ENCODE measurements at regions of chr12 and their contacts with region 1.

Region 1: DNA sequence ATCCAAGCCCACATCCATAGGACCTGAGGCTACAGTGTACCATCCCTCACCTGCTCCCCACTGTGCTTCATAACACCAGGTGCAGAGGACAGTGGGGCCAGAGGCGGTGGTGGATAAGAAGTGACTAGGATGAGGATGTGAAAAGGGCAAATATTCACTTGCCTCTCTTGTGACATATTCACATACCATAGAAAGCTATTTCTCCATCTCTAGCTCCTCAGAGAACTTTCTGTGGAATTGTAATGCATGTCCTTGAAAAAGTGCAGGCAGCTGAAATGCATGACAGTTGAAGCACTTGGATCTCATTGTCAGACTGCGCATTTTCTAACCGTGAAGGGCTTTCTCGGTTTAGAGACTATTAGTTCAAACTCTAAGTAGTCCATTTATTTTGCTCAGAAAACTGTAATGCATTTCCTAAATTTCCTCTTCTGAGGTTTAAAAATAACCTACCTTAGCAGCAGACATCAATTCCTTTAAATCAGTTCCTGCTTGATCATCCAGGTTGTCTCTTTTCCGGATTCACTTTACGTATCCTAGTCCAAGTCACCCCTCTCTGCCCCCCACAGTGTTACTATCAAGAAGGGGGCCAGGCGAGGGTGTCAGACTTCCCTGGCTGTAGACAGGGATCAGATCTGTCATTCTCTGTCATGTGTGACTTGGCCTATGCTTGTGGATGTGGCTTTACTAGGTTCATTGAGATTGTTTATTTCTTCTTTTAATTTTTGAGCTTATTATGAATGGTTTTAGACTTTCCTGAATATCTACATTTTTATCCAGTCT is 984.0 kb upstream of the TMEM132C start:
- DNase-seq: no peak
- ATAC-seq: no peak
- H3K4me3 ChIP-seq: no peak overlapping the region
- H3K4me3 Mint-ChIP-seq: no peak overlapping the region
- H3K27ac ChIP-seq: no peak overlapping the region
- H3K27ac Mint-ChIP-seq: no peak overlapping the region
- H3K4me1 ChIP-seq: no peaks in the 10 kb centered on the region
- H3K4me1 Mint-ChIP-seq: peaks cover 0 to 4% (median 4%) of the 10 kb centered on the region in 3 donors
- H3K27me3 ChIP-seq: peaks cover 0 to 17% of the 10 kb centered on the region in 2 experiments
- H3K27me3 Mint-ChIP-seq: peaks cover 0 to 7% of the 10 kb centered on the region in 2 donors

Region 2: GRCh38 chr12:127257366-127257935 is 25.5 kb before region 1 on chr12:
- CTCF ChIA-PET with region 1: interaction called in 1 of 2 experiments, 11 read pairs
- POLR2A ChIA-PET with region 1: no interaction called
- DNase-seq: no peak
- ATAC-seq: no peak
- H3K4me3 ChIP-seq: no peak overlapping the region
- H3K4me3 Mint-ChIP-seq: no peak overlapping the region
- H3K27ac ChIP-seq: no peak overlapping the region
- H3K27ac Mint-ChIP-seq: no peak overlapping the region
- H3K4me1 ChIP-seq: no peaks in the 10 kb centered on the region
- H3K4me1 Mint-ChIP-seq: no peaks in the 10 kb centered on the region
- H3K27me3 ChIP-seq: no peaks in the 10 kb centered on the region
- H3K27me3 Mint-ChIP-seq: no peaks in the 10 kb centered on the region

Region 3: GRCh38 chr12:127327986-127328385 is 45.0 kb after region 1 on chr12:
- CTCF ChIA-PET with region 1: no interaction called
- POLR2A ChIA-PET with region 1: no interaction called
- DNase-seq: no peak
- ATAC-seq: no peak
- H3K4me3 ChIP-seq: no peak overlapping the region
- H3K4me3 Mint-ChIP-seq: no peak overlapping the region
- H3K27ac ChIP-seq: no peak overlapping the region
- H3K27ac Mint-ChIP-seq: no peak overlapping the region
- H3K4me1 ChIP-seq: no peaks in the 10 kb centered on the region
- H3K4me1 Mint-ChIP-seq: no peaks in the 10 kb centered on the region
- H3K27me3 ChIP-seq: no peaks in the 10 kb centered on the region
- H3K27me3 Mint-ChIP-seq: peaks cover 0 to 2% of the 10 kb centered on the region in 2 donors

Region 4: GRCh38 chr12:127389923-127390322 is 106.9 kb after region 1 on chr12:
- CTCF ChIA-PET with region 1: no interaction called
- POLR2A ChIA-PET with region 1: no interaction called
- DNase-seq: no peak
- ATAC-seq: no peak
- H3K4me3 ChIP-seq: no peak overlapping the region
- H3K4me3 Mint-ChIP-seq: no peak overlapping the region
- H3K27ac ChIP-seq: no peak overlapping the region
- H3K27ac Mint-ChIP-seq: no peak overlapping the region
- H3K4me1 ChIP-seq: no peaks in the 10 kb centered on the region
- H3K4me1 Mint-ChIP-seq: no peaks in the 10 kb centered on the region
- H3K27me3 ChIP-seq: peaks cover 0 to 4% of the 10 kb centered on the region in 2 experiments
- H3K27me3 Mint-ChIP-seq: peaks cover 4 to 10% of the 10 kb centered on the region in 2 donors

Region 5: GRCh38 chr12:127813147-127813546 is 530.2 kb after region 1 on chr12:
- CTCF ChIA-PET with region 1: no interaction called
- POLR2A ChIA-PET with region 1: interaction called in 1 of 2 experiments, 10 read pairs
- DNase-seq: no peak
- ATAC-seq: no peak
- H3K4me3 ChIP-seq: no peak overlapping the region
- H3K4me3 Mint-ChIP-seq: no peak overlapping the region
- H3K27ac ChIP-seq: no peak overlapping the region
- H3K27ac Mint-ChIP-seq: no peak overlapping the region
- H3K4me1 ChIP-seq: no peaks in the 10 kb centered on the region
- H3K4me1 Mint-ChIP-seq: no peaks in the 10 kb centered on the region
- H3K27me3 ChIP-seq: no peaks in the 10 kb centered on the region
- H3K27me3 Mint-ChIP-seq: no peaks in the 10 kb centered on the region

Measured in T-cell (primary cell).